Right ventricle myocardium superior (tissue), 1 donor: ENCODE measurements at regions of chr11 and their contacts with region 1.

Region 1: DNA sequence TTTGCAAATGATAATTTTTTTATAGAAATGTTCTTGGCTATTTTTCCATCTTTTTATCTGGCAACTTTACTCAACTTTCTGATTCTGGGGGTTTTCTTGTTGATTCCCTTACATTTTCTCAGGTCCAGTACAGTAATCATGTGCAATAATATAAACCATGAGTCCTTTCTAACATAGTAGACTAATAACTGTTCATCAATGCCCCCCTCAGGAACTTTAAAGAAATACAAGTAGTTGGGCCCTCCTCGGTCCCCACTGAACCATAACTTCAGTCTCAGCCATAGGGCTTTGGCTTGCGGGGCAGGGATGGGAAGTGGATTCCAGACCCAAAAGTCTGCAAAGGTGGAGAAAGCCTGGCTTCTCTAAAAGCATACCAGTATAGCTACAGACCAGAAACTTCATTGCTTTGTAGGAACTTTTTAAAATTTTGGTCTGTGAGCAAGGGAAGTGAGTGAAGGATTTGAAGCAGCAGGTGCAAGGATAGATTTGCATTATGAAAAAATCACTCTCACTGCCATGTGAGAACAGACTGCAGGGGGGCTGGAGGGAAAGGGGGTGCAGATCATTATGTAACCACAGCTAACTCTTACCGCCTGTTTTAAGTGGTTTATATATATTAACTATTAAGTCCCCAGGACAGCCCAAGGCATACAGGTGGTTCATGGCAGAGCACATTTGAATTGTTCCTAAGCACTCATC is 10.4 kb upstream of the TUB start:
- DNase-seq: no peak
- ATAC-seq: peak; percentile 56

Region 2: GRCh38 chr11:7165911-7166310 is 904.7 kb before region 1 on chr11:
- intact Hi-C with region 1: no loop called
- DNase-seq: no peak
- ATAC-seq: no peak

Region 3: DNA sequence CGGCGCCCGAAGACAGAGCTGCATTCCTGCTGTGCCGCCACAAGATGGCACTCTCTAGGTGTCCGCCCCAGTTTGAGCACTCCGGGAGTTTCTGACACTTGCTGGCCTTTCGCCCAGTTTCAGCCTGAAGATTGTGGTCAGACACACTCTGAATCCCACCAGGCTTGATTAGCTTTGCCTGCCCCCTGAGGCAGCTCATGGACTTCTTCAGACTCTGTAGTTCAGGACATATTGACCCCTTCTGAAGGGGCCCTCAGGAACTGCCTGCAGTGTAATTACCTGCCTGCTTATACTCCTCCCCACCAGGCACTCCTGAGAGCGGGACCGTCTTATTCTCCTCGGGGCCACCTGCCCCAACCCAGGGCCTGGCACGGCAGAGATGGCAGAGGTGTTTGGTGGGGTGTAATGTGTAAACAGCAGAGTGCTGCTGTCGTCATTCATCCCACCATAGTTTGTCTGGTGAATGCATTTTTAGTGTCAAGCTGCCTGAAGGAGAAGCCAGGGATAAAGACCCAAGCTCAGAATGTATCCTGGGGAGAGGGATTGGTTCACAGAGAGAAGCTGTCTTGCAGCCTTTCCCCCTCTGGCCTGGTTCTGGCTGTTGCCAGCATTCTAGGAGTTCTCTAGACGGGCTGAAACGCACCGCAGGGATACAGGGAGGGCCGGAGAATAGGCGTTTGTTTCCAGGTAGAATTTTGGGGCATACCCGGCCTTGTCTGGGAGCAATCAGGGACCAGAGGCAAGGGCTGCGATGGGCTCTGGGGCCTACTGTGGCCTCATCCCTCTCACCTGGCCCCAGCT is 37.1 kb before region 1 on chr11:
- intact Hi-C with region 1: loop called (anchors 5 kb)
- DNase-seq: peak; percentile 87
- ATAC-seq: peak; percentile 70